ENCODE measurements at regions of chr5 and their contacts with region 1.

Region 1: DNA sequence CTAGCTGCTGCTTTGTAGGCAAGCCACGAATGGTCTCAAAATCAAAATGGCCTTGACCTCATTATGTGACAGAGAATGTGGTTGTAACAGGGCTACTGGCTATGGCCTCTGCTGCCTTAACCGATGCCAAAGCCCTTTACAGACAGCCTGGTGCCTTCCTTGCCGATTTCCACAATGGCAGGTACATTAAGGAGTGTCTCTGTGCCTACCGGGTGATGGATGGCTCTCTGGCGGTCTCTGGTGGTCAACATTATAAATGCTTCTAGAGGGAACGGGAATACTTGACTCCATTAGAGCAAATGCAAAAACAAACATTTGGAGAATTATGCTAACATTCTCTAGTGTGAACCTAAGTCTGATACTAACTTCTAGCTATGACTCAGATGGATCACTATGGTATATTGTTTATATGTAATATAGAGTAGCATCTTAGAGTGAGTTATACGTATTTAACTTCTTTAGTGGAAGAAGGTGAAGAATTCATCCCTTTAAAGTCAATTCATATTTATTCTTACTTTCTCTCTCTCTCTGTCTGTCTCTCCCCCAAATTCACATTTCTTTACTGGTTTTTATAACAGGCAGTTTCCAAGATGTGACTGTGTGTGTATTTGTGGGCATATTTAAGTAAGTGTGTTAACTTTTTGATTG is 52.5 kb downstream of the RPS23 start:
- DNase-seq: peak; percentile 58
- CTCF ChIP-seq: peak; percentile 58

Region 2: DNA sequence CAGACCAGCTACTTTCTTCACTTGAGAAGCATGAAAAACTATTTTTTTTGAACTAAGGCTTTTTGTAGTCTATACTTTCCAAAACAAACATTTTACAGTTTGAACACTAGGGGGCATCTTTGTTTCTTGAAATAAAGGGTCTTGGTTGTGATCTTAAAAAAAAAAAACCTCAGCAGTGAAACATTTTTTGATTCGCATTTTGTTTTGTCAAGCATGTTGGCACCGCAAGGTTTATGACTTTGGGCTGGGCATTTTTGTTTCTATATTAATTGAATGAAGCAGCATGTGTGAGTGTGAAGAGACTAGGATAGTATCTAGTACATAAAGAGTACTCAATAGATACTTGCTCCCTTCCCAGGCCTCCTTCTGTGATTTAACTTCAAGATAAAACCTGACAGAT is 800.1 kb before region 1 on chr5:
- in situ Hi-C with region 1: loop called (anchors 10 kb)
- DNase-seq: peak; percentile 37
- CTCF ChIP-seq: no peak

Region 3: DNA sequence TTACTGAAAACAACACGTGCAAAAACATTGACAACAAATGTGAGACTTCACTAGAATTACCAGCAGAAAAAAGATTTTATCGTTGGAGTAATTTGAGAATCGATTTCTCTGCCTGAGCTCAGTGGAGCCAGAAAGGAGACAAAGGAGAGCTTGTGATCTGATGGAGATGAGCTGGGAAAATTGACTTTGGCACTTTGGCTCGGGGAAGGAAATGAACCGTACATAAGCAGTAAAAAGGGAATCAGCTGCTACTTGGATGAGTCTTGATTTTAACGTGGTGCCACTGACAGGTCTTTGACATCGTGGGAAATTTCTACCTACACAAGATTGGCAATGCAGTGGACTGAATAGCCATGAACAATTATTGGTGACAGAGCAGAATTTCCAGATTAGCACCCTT is 297.2 kb after region 1 on chr5:
- in situ Hi-C with region 1: no loop called
- DNase-seq: no peak
- CTCF ChIP-seq: no peak

Region 4: GRCh38 chr5:83343299-83343698 is 1117.7 kb after region 1 on chr5:
- in situ Hi-C with region 1: no loop called
- DNase-seq: no peak
- CTCF ChIP-seq: no peak

Measured in GM13976 (cell line).